CD8-positive, alpha-beta T cell (primary cell): ENCODE measurements at regions of chr20 and their contacts with region 1.

Region 1: DNA sequence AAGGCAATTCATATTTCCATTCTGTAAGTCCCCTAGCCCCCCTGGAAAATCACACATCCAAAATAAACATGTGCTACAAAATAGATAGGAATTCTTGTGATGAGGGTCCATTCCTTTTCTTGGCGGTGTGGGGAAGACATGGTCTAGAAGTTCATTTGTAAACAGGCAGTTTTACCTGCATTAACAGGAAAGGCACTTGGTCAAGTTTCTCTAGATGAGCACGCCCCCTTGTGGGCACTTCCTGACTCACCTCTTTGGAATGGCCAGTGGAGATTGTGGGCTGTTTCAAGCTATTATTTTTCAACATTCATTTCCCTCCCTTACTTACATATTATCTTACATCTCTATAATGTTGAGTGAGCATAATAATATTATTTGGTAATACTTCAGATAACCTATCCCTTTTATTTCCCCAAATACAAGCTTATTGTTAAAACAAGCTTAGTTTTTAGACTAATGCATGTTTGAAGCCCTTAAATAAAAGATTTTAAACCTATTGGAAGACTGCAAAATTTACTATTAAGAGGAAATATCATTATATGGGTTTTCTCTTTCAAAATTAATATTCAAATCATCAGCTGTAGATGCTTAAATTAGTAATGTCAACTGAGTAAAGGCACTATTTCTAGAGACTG is 92.1 kb downstream of the TASP1 start:
- DNase-seq: peak; percentile 28 to 75 (median 58)
- ATAC-seq: no peak
- H3K4me3 ChIP-seq: no peak overlapping the region
- H3K4me3 Mint-ChIP-seq: no peak overlapping the region
- H3K27ac ChIP-seq: no peak overlapping the region
- H3K27ac Mint-ChIP-seq: no peak overlapping the region
- H3K4me1 ChIP-seq: no peaks in the 10 kb centered on the region
- H3K4me1 Mint-ChIP-seq: no peaks in the 10 kb centered on the region
- H3K27me3 ChIP-seq: no peaks in the 10 kb centered on the region
- H3K27me3 Mint-ChIP-seq: no peaks in the 10 kb centered on the region
- CTCF ChIP-seq: peak; percentile 72

Region 2: GRCh38 chr20:13111249-13111911 is 435.2 kb before region 1 on chr20:
- CTCF ChIA-PET with region 1: interaction called, 10 read pairs
- POLR2A ChIA-PET with region 1: no interaction called
- intact Hi-C with region 1: no loop called
- DNase-seq: no peak
- ATAC-seq: no peak
- H3K4me3 ChIP-seq: no peak overlapping the region
- H3K4me3 Mint-ChIP-seq: no peak overlapping the region
- H3K27ac ChIP-seq: no peak overlapping the region
- H3K27ac Mint-ChIP-seq: no peak overlapping the region
- H3K4me1 ChIP-seq: no peaks in the 10 kb centered on the region
- H3K4me1 Mint-ChIP-seq: no peaks in the 10 kb centered on the region
- H3K27me3 ChIP-seq: no peaks in the 10 kb centered on the region
- H3K27me3 Mint-ChIP-seq: peaks cover under 1% of the 10 kb centered on the region
- CTCF ChIP-seq: no peak

Region 3: GRCh38 chr20:13533946-13534345 is 12.7 kb before region 1 on chr20:
- CTCF ChIA-PET with region 1: interaction called, 22 read pairs
- POLR2A ChIA-PET with region 1: no interaction called
- intact Hi-C with region 1: no loop called
- DNase-seq: no peak
- ATAC-seq: no peak
- H3K4me3 ChIP-seq: no peak overlapping the region
- H3K4me3 Mint-ChIP-seq: no peak overlapping the region
- H3K27ac ChIP-seq: no peak overlapping the region
- H3K27ac Mint-ChIP-seq: no peak overlapping the region
- H3K4me1 ChIP-seq: no peaks in the 10 kb centered on the region
- H3K4me1 Mint-ChIP-seq: no peaks in the 10 kb centered on the region
- H3K27me3 ChIP-seq: no peaks in the 10 kb centered on the region
- H3K27me3 Mint-ChIP-seq: no peaks in the 10 kb centered on the region
- CTCF ChIP-seq: no peak